Right ventricle myocardium inferior (tissue), 1 donor: ENCODE measurements at regions of chr6 and their contacts with region 1.

Region 1: GRCh38 chr6:25138237-25139125 is 140.7 kb upstream of the CARMIL1 start:
- DNase-seq: peak; percentile 73
- ATAC-seq: peak; percentile 92

Region 2: DNA sequence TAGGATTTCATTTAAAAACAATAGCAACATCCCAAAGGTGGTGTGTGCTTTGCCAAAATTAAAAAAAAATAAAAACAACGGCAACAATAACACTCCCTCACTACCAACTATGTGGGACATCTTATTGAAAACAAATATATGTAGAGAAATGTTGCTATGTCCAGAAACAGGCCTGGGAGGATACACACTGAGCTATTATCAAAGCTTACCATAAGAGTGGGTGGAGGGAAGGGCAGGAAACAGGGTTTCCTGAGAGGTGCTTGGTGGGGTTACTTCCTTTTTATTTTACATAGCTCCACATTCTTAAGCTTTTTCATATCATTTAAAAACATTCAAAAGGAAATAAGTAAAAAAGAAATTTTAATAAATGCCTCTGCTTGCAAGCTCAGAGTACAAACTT is 52.7 kb before region 1 on chr6:
- intact Hi-C with region 1: loop called (anchors 5 kb)
- DNase-seq: no peak
- ATAC-seq: no peak

Region 3: GRCh38 chr6:25179051-25179778 is 40.7 kb after region 1 on chr6:
- intact Hi-C with region 1: loop called (anchors 5 kb)
- DNase-seq: no peak
- ATAC-seq: no peak

Region 4: DNA sequence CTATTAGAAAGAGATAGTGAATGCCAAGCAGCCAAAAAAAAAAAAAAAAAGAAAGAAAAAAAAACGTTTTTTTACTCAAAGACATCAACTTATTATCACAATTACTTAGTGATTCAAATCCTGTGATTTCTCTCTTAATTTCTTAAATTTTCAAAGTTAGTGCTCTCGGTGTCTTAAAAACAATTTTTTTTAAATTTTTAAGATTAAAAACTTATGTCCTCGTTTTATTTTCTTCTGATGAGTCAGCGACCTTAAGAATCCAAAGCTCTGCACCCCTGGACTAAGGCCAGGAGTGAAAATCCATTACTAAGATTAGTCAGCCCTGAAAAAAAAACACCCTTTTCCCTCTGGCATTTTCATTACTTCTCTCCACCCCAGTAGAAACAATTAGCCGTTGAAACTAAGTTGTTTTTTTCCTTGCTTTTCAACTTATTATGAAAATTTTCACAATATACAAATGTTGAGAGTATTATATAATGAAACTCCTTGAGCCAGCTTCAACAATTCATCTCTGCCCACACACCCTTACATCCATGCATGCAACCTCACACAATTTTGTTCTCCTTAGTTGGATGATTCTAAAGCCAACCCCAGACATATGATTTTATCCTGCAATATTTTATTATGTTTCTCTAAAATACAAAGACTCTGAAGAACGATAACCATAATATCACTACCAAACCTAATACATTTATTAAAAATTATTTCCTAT is 55.1 kb after region 1 on chr6:
- intact Hi-C with region 1: loop called (anchors 5 kb)
- DNase-seq: no peak
- ATAC-seq: peak; percentile 74